ENCODE measurements at regions of chr7 and their contacts with region 1.

Region 1: GRCh38 chr7:992709-993607 is 10.0 kb downstream of the CYP2W1 start:
- DNase-seq: peak; percentile 89 to 96
- ATAC-seq: peak; percentile 99 to 100 (median 100)
- H3K4me3 ChIP-seq: no peak overlapping the region
- H3K4me3 Mint-ChIP-seq: no peak overlapping the region
- H3K27ac ChIP-seq: no peak overlapping the region
- H3K27ac Mint-ChIP-seq: no peak overlapping the region
- H3K4me1 ChIP-seq: peaks cover 33% of the 10 kb centered on the region
- H3K4me1 Mint-ChIP-seq: peaks cover 5 to 8% of the 10 kb centered on the region in 2 donors
- H3K27me3 ChIP-seq: no peaks in the 10 kb centered on the region
- H3K27me3 Mint-ChIP-seq: no peaks in the 10 kb centered on the region
- CTCF ChIP-seq: peak; percentile 99

Region 2: DNA sequence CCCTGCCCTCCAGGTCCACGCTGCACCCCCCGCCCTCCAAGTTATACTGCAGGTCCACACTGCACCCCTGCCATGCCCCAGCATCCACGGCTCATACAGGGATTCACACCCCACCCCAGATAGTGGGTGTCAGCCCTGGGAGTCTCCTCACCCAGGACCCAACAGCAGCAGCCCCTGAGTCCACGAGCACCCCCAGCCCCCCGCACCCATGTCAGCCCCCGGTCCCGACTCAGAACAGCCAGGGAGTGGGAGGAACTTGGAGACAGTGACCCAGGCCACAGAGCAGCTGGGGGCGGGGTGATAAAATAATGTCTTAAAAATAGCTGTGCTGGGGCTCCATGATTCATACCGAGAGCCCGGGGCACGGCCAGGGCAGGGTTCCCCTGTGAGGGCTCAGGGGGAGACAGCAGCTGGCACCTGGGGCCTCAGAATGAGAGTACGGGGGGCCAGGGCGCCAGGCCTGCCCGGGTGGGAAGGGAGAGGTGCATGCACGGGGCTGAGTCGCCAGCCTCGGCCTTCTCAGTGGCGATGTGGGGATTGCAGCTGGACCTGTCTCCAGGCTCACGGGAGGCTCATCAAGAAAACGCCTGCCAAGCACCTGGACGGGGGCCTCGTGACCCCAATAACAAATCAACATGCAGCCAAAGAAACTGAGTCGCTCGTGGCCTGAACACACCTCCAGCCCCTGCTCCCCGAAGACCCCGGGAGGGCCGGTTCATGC is 68.3 kb before region 1 on chr7:
- intact Hi-C with region 1: no loop called
- DNase-seq: peak; percentile 55 to 71
- ATAC-seq: peak; percentile 21 to 45 (median 43)
- H3K4me3 ChIP-seq: peak overlapping the region; percentile 21
- H3K4me3 Mint-ChIP-seq: peak overlapping the region; percentile 86
- H3K27ac ChIP-seq: peak overlapping the region; percentile 68
- H3K27ac Mint-ChIP-seq: peak overlapping the region; percentile 85 to 93
- H3K4me1 ChIP-seq: peaks cover 93% of the 10 kb centered on the region
- H3K4me1 Mint-ChIP-seq: peaks cover 51 to 68% of the 10 kb centered on the region in 2 donors
- H3K27me3 ChIP-seq: no peaks in the 10 kb centered on the region
- H3K27me3 Mint-ChIP-seq: no peaks in the 10 kb centered on the region
- CTCF ChIP-seq: no peak

Region 3: DNA sequence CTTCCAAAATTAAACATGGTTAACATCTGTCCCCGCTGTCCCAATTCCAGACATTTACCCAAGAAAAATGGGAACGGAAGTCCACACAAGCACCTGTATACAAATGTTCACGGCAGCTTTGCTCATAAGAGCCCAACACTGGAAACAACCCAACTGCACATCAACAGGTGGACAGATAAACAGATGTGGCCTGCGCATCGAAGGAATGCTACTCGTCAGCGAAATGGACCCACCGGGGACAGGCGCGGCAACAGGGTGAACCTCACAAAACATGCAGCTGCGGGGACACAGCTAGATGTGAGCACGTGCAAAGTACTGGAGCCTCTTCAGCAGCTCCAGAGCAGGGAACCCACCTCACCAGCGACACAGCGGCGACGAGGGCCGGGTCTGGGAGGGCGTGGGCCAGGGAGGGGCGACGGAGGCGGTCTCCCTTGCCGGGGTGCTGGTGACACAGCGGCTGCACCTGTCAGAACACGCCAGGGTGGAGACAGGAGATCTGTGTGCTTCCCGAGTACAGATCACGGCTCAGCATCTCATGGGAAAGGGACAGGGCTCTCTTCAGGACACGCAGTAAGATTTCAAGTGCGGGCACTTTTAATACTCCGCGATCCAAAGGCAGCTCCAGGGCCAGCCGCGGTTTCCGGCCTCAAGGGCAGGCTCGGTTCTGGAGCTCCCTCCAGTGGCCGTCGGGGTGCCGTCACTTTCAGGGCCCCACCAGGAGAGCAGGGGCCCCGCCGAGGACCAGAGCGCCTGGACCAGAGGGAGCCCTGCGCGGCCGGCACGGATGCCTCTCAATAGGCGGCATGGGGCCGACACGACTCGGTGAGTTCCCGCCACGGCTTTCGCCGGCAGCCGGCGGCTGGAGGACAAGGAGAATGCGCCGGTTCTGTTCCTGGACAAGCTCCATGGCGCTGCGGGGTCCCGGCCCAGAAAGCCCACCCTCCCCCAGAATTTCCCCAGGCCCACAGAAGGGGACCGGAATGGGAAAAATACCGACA is 72.6 kb after region 1 on chr7:
- intact Hi-C with region 1: loop called (anchors 1 kb)
- DNase-seq: peak; percentile 82 to 89
- ATAC-seq: peak; percentile 88 to 99 (median 98)
- H3K4me3 ChIP-seq: no peak overlapping the region
- H3K4me3 Mint-ChIP-seq: no peak overlapping the region
- H3K27ac ChIP-seq: no peak overlapping the region
- H3K27ac Mint-ChIP-seq: no peak overlapping the region
- H3K4me1 ChIP-seq: peaks cover 28% of the 10 kb centered on the region
- H3K4me1 Mint-ChIP-seq: peaks cover 13 to 23% of the 10 kb centered on the region in 2 donors
- H3K27me3 ChIP-seq: peaks cover 2% of the 10 kb centered on the region
- H3K27me3 Mint-ChIP-seq: peaks cover 32 to 34% of the 10 kb centered on the region in 2 donors
- CTCF ChIP-seq: peak; percentile 94

Region 4: DNA sequence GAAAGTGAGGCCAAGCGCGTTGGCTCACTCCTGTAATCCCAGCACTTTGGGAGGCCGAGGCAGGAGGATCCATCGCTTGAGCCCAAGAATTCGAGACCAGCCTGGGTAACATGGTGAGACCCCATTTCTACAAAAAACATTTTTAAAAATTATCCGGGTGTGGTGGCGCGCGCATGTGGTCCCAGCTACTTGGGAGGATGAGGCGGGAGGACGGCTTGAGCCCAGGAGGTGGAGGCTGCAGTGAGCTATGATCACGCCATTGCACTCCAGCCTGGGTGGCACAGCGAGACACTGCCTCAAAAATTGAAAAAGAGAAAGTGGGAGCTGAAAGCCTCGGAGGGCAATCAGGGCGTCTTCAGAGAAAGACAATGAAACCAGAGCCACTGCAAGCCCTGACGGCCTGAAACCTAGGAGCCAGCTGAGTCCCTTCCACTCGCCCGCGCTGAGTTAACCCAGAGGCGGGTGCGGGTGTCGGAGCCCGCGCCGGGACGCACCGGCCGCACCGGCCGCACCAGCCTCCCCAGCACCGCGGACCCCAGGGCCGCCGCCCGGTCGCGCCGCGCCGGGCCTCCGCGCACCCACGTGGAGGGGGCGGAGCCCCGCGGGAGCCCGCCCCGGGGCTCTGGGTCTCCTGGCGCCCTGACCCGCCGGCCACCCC is 144.7 kb after region 1 on chr7:
- intact Hi-C with region 1: loop called (anchors 1 kb)
- DNase-seq: no peak
- ATAC-seq: peak; percentile 72 to 85 (median 79)
- H3K4me3 ChIP-seq: peak overlapping the region; percentile 68
- H3K4me3 Mint-ChIP-seq: peak overlapping the region; percentile 92
- H3K27ac ChIP-seq: peak overlapping the region; percentile 77
- H3K27ac Mint-ChIP-seq: peak overlapping the region; percentile 88 to 96
- H3K4me1 ChIP-seq: peaks cover 17% of the 10 kb centered on the region
- H3K4me1 Mint-ChIP-seq: peaks cover 16 to 18% of the 10 kb centered on the region in 2 donors
- H3K27me3 ChIP-seq: no peaks in the 10 kb centered on the region
- H3K27me3 Mint-ChIP-seq: no peaks in the 10 kb centered on the region
- CTCF ChIP-seq: no peak

Region 5: DNA sequence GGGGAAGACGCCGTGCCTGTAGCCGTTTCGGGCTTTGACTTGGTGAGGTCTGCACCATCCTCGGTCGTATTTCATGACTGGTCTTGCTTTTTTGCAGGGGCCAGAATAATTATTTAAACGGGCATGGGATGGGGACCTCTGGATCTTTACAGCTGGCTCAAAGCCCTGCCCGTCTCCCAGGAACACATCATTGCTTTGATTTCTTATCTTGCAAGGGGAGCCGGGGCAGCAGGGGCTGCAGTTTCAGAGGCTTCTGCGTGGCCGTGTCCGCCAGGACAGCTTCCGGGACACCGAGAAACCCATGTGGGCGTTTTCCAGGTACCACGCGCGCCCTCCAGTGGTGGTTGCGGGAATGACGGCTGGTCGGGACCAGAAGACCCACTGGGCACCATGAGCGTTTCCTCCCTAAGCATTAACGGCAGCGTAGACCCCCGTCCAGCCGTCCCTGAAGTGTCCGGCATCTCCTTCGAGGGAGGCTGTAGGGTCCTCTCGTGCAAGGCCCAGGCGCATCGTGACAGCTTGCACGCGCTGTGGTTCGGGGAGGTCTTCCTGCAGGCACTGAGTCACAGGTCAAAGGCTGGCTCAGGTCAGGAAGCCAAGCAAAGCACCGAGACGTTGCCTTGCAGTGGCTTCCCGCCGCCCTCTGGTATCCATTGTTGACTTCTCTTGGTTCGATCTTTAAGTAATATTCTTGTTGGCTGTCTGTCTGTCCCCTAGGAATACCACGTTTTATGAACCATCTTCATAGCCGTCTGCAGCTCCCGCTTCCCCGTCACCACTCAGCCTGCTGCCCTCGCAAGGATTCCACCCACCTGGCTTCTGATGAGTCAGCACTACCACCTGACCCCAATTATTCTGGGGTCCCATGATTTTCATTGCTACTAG is 183.3 kb after region 1 on chr7:
- intact Hi-C with region 1: loop called (anchors 1 kb)
- DNase-seq: peak; percentile 82
- ATAC-seq: peak; percentile 80 to 81 (median 80)
- H3K4me3 ChIP-seq: no peak overlapping the region
- H3K4me3 Mint-ChIP-seq: peak overlapping the region; percentile 64
- H3K27ac ChIP-seq: no peak overlapping the region
- H3K27ac Mint-ChIP-seq: peak overlapping the region in 1 of 2 donors; percentile 65
- H3K4me1 ChIP-seq: peaks cover 8% of the 10 kb centered on the region
- H3K4me1 Mint-ChIP-seq: peaks cover 12 to 14% of the 10 kb centered on the region in 2 donors
- H3K27me3 ChIP-seq: no peaks in the 10 kb centered on the region
- H3K27me3 Mint-ChIP-seq: peaks cover 11 to 20% of the 10 kb centered on the region in 2 donors
- CTCF ChIP-seq: peak; percentile 77

Measured in natural killer cell (primary cell).